OCI-LY7 (cell line): ENCODE measurements at regions of chr6 and their contacts with region 1.

Region 1: DNA sequence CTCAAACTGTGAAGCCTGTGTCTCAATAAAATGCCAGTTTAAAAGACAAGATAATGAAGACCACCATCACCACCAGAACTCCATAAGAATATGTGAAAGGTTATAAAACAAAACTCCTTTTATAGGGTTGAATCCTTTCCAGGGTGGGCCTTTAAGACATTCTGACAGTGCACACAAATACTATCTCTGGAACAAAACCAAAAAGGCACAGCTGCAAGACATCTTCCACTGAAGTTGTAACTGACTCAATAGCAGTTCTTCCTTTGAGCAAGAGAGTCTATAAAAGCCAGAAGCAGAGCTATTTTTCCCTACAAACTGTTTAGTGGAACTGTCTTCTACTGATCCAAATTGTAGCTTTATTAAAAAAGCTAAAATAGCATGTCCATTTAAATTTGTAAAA is 81.6 kb downstream of the EPB41L2 start:
- DNase-seq: no peak
- H3K4me3 ChIP-seq: no peak overlapping the region
- H3K27ac ChIP-seq: no peak overlapping the region
- H3K4me1 ChIP-seq: no peaks in the 10 kb centered on the region
- CTCF ChIP-seq: no peak

Region 2: GRCh38 chr6:130929036-130929678 is 52.3 kb before region 1 on chr6:
- CTCF ChIA-PET with region 1: no interaction called
- POLR2A ChIA-PET with region 1: no interaction called
- intact Hi-C with region 1: no loop called
- DNase-seq: no peak
- H3K4me3 ChIP-seq: no peak overlapping the region
- H3K27ac ChIP-seq: no peak overlapping the region
- H3K4me1 ChIP-seq: no peaks in the 10 kb centered on the region
- CTCF ChIP-seq: no peak

Region 3: GRCh38 chr6:130945401-130945919 is 35.9 kb before region 1 on chr6:
- CTCF ChIA-PET with region 1: no interaction called
- POLR2A ChIA-PET with region 1: interaction called, 16 read pairs
- intact Hi-C with region 1: no loop called
- DNase-seq: no peak
- H3K4me3 ChIP-seq: no peak overlapping the region
- H3K27ac ChIP-seq: no peak overlapping the region
- H3K4me1 ChIP-seq: peaks cover 8% of the 10 kb centered on the region
- CTCF ChIP-seq: no peak

Region 4: GRCh38 chr6:131146865-131147264 is 165.5 kb after region 1 on chr6:
- CTCF ChIA-PET with region 1: no interaction called
- POLR2A ChIA-PET with region 1: no interaction called
- intact Hi-C with region 1: no loop called
- DNase-seq: no peak
- H3K4me3 ChIP-seq: no peak overlapping the region
- H3K27ac ChIP-seq: no peak overlapping the region
- H3K4me1 ChIP-seq: no peaks in the 10 kb centered on the region
- CTCF ChIP-seq: no peak